ENCODE measurements at regions of chr16 and their contacts with region 1.

Region 1: DNA sequence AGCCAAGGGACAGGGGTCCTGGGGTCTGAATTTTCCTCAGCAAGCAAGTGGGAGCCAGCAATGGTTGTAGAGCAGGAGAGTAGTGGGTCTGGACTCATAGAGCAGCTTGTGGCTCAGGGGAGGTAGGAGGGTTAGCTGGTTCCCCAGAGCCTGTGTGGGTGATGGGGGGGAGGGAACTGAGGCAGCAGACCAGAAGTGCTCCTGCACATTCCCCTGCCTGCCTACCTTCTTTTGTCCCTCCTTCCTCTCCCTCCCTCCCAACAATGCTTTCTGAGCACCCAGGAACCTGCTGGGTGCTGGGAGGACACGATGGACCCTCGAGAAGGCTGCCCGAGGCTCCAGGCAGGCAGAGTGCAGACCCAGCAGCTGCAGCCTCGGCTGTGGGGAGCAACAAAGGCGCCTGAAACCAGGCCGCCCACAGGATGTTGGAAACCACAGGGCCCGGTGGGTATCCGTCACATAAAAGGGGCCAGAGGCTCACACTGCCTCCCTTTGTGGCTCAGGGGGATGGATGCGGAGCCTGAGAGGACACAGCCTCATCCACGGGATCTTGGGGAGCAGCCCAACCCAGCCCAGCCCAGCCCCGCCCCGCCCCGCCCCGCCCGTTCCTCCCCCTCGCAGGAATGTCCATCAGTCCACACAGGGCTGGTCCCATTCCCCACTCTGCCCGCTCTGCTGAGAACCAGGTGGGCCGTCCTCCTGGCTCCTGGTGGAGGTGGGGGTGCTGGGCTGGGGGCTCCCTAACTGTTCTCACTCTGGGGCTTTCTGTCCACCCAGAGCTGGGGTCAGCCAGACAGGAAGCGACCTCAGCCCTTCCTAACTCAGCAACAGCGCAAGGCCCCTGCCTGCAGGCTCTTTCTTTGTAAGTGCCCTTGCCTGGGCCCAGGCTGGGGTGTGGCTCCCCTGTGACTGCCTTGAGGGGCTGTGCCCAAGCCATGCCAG is 1.7 kb upstream of the NLRC3 start:
- DNase-seq: peak; percentile 91
- H3K4me3 Mint-ChIP-seq: peak overlapping the region; percentile 98
- H3K27ac Mint-ChIP-seq: peak overlapping the region; percentile 96
- H3K4me1 Mint-ChIP-seq: peaks cover 36% of the 10 kb centered on the region
- H3K27me3 Mint-ChIP-seq: no peaks in the 10 kb centered on the region

Region 2: DNA sequence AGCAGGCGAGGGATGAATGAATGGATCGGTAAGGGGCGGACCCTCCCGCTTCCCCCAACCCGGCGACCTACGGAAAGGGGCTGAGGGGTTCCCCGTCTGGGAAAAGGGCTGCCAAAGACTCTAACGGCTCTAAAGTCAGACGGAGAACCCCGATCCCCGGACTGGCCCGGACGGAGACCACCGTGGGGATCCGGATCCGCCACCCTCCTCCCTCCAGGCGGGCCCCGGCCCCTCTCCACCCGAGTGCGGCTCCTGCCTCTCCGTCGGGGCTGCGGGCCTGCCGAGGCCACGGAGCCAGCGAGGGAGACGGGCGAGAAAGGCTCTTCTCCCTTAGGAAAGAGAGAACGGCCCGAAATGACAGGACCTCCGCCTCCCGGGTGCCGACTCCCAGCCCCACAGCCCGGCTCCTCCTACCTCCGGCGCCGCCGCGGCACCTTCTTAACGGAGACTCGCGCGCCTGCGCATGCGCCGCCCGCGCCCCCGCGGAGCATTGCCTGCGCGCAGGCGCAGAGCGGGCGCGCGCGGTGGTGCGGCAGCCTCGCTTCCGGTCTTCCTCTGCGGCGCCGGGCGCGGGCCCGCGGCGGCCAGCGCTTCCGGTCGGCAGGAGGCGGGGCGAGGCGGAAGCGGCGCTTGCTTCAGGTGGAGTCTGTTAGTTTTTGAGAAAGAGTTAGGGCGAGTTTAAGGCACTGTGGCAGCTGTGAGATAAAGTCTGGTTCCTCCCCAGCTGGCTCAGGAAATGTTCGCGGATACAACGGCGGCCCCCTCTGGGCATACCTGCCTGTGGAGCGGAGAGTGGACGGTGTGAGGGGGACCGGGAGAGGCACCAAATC is 32.5 kb after region 1 on chr16 and contains the start of gene SLX4:
- intact Hi-C with region 1: loop called (anchors 2 kb)
- DNase-seq: peak; percentile 99
- H3K4me3 Mint-ChIP-seq: peak within 1 kb of the TSS; percentile 99
- H3K27ac Mint-ChIP-seq: peak within 1 kb of the TSS; percentile 95
- H3K4me1 Mint-ChIP-seq: peaks cover 44% of the 10 kb centered on the region
- H3K27me3 Mint-ChIP-seq: no peaks in the 10 kb centered on the region
- total RNA-seq, gene SLX4: 10.6 and 10.9 TPM in 2 replicates

Measured in activated CD4-positive, alpha-beta T cell treated with anti-CD3 and anti-CD28 coated beads, Interleukin-2, amount 10 ng/mL, durations not matched to agents 24 days and 14 days (primary cell).